Esophagus muscularis mucosa (tissue), 4 donors: ENCODE measurements at regions of chr6 and their contacts with region 1.

Region 1: GRCh38 chr6:33579828-33580714 is at the start of gene BAK1:
- DNase-seq: peak; percentile 98
- H3K4me3 ChIP-seq: peak within 1 kb of the TSS; percentile 83 to 94 (median 89)
- H3K27ac ChIP-seq: peak within 1 kb of the TSS; percentile 86 to 91 (median 88)
- H3K4me1 ChIP-seq: peaks cover 30 to 46% (median 38%) of the 10 kb centered on the region in 4 donors
- H3K27me3 ChIP-seq: no peaks in the 10 kb centered on the region
- CTCF ChIP-seq: peak; percentile 27 to 58 (median 36)
- EP300 ChIP-seq: no peak
- POLR2A ChIP-seq: peak; percentile 50
- total RNA-seq, gene BAK1: 9.9 to 13.1 (median 11.7) TPM

Region 2: GRCh38 chr6:32933636-32934085 is 646.4 kb before region 1 on chr6:
- intact Hi-C with region 1: no loop called
- DNase-seq: no peak
- H3K4me3 ChIP-seq: no peak overlapping the region
- H3K27ac ChIP-seq: no peak overlapping the region
- H3K4me1 ChIP-seq: no peaks in the 10 kb centered on the region
- H3K27me3 ChIP-seq: peaks cover 0 to 3% (median 0%) of the 10 kb centered on the region in 4 donors
- CTCF ChIP-seq: peak; percentile 82 to 87 (median 86)
- EP300 ChIP-seq: no peak
- POLR2A ChIP-seq: no peak

Region 3: DNA sequence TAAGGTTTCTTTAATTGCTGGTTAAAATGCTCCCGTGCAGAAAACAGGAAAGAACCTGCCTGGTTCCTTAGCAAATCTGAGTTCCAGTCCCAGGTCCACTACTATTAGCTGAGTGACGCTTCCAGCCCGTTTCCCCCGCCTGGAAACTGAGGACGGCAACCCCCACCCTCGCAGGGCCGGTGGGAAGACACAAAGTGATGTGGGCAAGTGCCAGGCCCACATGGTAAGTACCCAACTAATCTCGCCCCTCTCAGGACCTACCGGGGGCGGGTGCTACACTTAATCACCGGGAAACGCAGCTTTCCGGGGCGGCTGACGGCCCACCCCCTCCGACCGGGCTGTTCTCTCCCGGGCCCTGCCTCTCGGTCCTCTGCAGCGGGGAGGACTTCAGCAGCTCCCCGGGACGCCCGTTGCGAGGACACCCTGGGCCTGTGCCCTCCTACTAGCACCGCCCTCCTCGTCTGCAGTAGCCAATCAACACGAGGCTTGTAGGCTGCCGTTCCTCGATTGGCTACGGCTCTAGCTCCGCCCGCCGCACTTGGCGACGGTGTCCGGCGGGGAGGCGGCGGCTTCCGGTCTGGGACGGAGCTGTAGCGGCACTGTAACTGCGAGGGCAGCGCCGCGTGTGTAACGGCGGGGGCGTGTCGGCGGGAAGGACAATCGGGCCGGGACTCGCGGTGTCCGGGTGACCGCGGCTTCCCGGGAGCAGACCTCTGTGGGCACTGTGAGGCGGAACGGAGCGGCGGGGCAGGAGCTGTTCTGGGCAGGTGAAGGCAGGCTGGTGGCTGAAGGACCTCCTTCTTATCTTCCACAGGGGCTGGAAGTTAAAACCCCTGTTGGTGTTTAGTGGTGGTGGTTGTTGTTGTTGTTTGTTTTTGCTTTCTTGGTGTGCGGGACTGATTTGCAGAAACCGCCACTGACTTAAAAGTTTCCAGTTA is 125.8 kb before region 1 on chr6 and contains the start of gene ZBTB9:
- intact Hi-C with region 1: loop called (anchors 10 kb)
- DNase-seq: peak; percentile 99
- H3K4me3 ChIP-seq: peak within 1 kb of the TSS; percentile 79 to 97 (median 86)
- H3K27ac ChIP-seq: peak within 1 kb of the TSS; percentile 80 to 88 (median 84)
- H3K4me1 ChIP-seq: peaks cover 17 to 35% (median 26%) of the 10 kb centered on the region in 4 donors
- H3K27me3 ChIP-seq: no peaks in the 10 kb centered on the region
- CTCF ChIP-seq: peak in 1 of 3 experiments; percentile 14
- EP300 ChIP-seq: no peak
- POLR2A ChIP-seq: peak; percentile 60
- total RNA-seq, gene ZBTB9: 1.7 to 3.5 (median 3.0) TPM

Region 4: GRCh38 chr6:33869826-33870423 is 289.9 kb after region 1 on chr6:
- intact Hi-C with region 1: no loop called
- DNase-seq: no peak
- H3K4me3 ChIP-seq: no peak overlapping the region
- H3K27ac ChIP-seq: no peak overlapping the region
- H3K4me1 ChIP-seq: no peaks in the 10 kb centered on the region
- H3K27me3 ChIP-seq: peaks cover 0 to 37% (median 0%) of the 10 kb centered on the region in 4 donors
- CTCF ChIP-seq: no peak
- EP300 ChIP-seq: no peak
- POLR2A ChIP-seq: no peak